ENCODE measurements at regions of chr2 and their contacts with region 1.

Region 1: GRCh38 chr2:6896930-6897759 is 19.6 kb downstream of the RSAD2 start:
- DNase-seq: peak in 2 of 9 experiments; percentile 61 to 70
- ATAC-seq: peak; percentile 58
- H3K4me3 ChIP-seq: no peak overlapping the region
- H3K4me3 Mint-ChIP-seq: no peak overlapping the region
- H3K27ac ChIP-seq: no peak overlapping the region
- H3K27ac Mint-ChIP-seq: no peak overlapping the region
- H3K4me1 ChIP-seq: peaks cover 7% of the 10 kb centered on the region
- H3K4me1 Mint-ChIP-seq: peaks cover 5% of the 10 kb centered on the region
- H3K27me3 ChIP-seq: no peaks in the 10 kb centered on the region
- H3K27me3 Mint-ChIP-seq: no peaks in the 10 kb centered on the region
- CTCF ChIP-seq: peak; percentile 95

Region 2: DNA sequence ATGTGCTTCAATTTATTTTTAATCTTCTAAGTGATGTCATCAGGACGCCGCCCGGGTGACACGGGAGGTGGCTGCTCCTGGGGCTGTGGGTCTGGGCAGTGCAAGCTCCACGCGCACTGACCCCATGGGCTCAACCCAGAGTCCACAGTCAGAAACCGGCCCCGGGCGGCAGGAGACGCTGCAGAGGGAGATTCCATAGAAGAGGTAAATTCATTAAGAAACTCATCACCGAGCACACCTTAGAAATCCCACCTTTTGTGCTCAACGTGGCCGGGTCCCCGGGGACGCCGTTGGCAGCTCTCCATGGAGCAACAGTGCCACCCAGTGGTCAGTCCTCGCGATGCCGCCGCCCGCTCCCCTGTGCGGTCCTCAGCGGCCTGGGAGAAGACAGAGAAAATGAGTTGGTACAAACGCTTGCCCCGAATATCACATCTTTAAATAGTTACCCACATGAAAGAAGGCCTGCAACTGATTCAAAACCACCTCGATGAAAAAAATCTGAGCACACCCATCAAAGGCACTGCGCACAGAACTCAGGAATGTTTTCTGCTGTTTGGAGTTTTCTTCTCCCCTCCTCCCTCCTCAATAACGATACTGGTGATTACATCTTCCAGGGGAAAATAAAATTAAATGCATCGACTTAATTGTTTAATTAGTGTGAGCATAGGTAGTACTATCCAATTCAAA is 124.0 kb before region 1 on chr2:
- CTCF ChIA-PET with region 1: no interaction called
- POLR2A ChIA-PET with region 1: no interaction called
- intact Hi-C with region 1: no loop called
- DNase-seq: peak; percentile 52 to 80 (median 63)
- ATAC-seq: peak; percentile 77
- H3K4me3 ChIP-seq: no peak overlapping the region
- H3K4me3 Mint-ChIP-seq: no peak overlapping the region
- H3K27ac ChIP-seq: no peak overlapping the region
- H3K27ac Mint-ChIP-seq: no peak overlapping the region
- H3K4me1 ChIP-seq: peaks cover 7% of the 10 kb centered on the region
- H3K4me1 Mint-ChIP-seq: peaks cover 2% of the 10 kb centered on the region
- H3K27me3 ChIP-seq: peaks cover 0 to 8% of the 10 kb centered on the region in 2 experiments
- H3K27me3 Mint-ChIP-seq: peaks cover 21% of the 10 kb centered on the region
- CTCF ChIP-seq: peak; percentile 90

Region 3: GRCh38 chr2:6865346-6866274 is 31.5 kb before region 1 on chr2 and contains the start of gene CMPK2:
- CTCF ChIA-PET with region 1: interaction called, 17 read pairs
- POLR2A ChIA-PET with region 1: no interaction called
- intact Hi-C with region 1: no loop called
- DNase-seq: peak; percentile 53 to 90 (median 82)
- ATAC-seq: peak; percentile 75
- H3K4me3 ChIP-seq: peak within 1 kb of the TSS; percentile 75 to 86
- H3K4me3 Mint-ChIP-seq: peak within 1 kb of the TSS; percentile 99
- H3K27ac ChIP-seq: peak within 1 kb of the TSS; percentile 33 to 72
- H3K27ac Mint-ChIP-seq: peak within 1 kb of the TSS; percentile 96
- H3K4me1 ChIP-seq: peaks cover 19% of the 10 kb centered on the region
- H3K4me1 Mint-ChIP-seq: peaks cover 17% of the 10 kb centered on the region
- H3K27me3 ChIP-seq: no peaks in the 10 kb centered on the region
- H3K27me3 Mint-ChIP-seq: no peaks in the 10 kb centered on the region
- CTCF ChIP-seq: peak; percentile 58
- total RNA-seq, gene CMPK2: 3.0 to 4.0 TPM

Region 4: DNA sequence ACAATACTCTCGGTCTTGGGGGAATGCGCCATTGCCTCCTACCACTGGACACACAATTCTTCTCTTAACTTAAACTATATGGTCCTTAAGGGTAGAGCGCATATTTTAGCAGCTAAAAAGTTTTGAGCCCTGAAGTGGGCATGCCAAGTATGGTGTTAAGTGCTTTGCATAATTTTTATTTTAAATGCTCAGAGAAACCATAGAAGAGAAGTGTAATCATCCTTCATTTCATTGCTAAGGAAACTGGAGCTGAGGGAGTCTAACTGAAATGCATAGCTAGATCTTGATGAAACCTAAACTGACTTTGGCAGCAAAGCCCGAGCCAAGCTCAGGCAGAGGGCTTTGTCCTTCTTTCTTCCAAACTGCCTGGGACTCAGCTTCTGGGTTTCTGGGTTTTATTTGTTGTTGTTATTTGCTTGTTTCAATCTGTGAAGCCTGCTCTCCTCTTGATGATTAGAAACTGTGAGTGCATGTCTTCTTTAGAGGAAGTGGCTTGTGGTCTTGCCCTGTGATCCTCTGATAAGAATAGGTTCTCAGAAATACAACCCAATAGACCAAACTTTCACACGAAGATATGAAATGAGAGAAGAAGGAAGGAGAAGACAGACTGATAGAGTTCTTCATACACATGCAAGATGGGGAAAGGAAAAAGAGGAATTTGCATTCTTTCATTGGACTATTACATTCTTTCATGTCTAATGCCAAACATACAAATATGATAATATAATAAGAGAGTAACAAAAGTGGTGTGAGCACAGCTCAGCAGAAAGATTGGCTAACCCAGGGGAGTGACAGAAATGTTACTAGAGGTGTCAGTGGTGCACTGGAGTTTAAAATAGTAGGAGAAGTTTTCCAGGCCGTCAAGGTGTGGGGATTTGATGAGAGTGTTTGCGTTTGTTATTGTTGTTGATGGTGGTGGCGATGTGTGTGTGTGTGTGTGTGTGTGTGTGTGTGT is 12.6 kb after region 1 on chr2:
- CTCF ChIA-PET with region 1: interaction called, 109 read pairs
- POLR2A ChIA-PET with region 1: interaction called, 8 read pairs
- intact Hi-C with region 1: loop called in 1 of 2 experiments (anchors 1 kb)
- DNase-seq: peak in 5 of 9 experiments; percentile 26 to 84 (median 53)
- ATAC-seq: peak; percentile 69
- H3K4me3 ChIP-seq: peak overlapping the region; percentile 1 to 19
- H3K4me3 Mint-ChIP-seq: peak overlapping the region; percentile 67
- H3K27ac ChIP-seq: peak overlapping the region; percentile 1 to 60
- H3K27ac Mint-ChIP-seq: peak overlapping the region; percentile 88
- H3K4me1 ChIP-seq: peaks cover 91% of the 10 kb centered on the region
- H3K4me1 Mint-ChIP-seq: peaks cover 89% of the 10 kb centered on the region
- H3K27me3 ChIP-seq: no peaks in the 10 kb centered on the region
- H3K27me3 Mint-ChIP-seq: no peaks in the 10 kb centered on the region
- CTCF ChIP-seq: no peak

Region 5: DNA sequence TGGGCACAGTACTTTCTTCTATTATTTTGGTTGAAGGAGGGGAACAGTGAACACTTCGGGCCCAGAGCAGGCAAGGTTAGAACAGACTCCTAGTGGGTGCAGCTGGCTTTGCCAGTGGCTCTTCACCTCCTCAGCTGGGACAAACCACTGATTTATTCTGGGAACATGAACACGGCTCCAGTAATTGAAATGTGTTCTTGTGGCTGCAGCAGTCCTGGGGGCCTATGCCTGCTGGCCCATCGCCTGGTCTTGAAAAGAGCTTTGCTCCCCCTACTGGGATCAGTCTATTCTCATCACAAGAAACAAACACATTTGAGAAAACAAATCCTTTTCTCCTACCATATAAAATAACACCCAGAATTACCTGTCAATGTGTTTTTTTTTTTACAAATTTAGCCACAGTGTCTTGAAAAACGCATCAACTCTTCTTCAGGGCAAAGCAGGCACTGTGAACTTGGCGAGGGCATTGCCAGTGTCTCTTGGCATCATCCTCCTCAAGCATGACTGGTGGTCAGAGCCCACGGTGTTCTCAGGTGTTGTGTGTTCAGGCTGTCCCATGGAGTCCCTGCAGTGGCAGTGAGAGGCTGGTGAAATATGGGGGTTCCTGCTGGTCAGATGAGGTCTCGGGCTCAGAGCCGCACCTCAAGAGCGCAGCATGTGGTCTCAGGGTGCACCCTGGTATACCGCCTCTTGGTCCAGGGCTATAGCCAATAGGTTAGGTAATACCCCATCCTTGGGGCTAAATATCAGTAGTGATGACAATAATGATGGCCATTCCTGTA is 71.4 kb after region 1 on chr2:
- CTCF ChIA-PET with region 1: interaction called, 5 read pairs
- POLR2A ChIA-PET with region 1: no interaction called
- intact Hi-C with region 1: loop called (anchors 1 to 2 kb)
- DNase-seq: peak in 2 of 9 experiments; percentile 11 to 25
- ATAC-seq: no peak
- H3K4me3 ChIP-seq: no peak overlapping the region
- H3K4me3 Mint-ChIP-seq: no peak overlapping the region
- H3K27ac ChIP-seq: no peak overlapping the region
- H3K27ac Mint-ChIP-seq: no peak overlapping the region
- H3K4me1 ChIP-seq: no peaks in the 10 kb centered on the region
- H3K4me1 Mint-ChIP-seq: peaks cover 12% of the 10 kb centered on the region
- H3K27me3 ChIP-seq: no peaks in the 10 kb centered on the region
- H3K27me3 Mint-ChIP-seq: no peaks in the 10 kb centered on the region
- CTCF ChIP-seq: no peak

Region 6: DNA sequence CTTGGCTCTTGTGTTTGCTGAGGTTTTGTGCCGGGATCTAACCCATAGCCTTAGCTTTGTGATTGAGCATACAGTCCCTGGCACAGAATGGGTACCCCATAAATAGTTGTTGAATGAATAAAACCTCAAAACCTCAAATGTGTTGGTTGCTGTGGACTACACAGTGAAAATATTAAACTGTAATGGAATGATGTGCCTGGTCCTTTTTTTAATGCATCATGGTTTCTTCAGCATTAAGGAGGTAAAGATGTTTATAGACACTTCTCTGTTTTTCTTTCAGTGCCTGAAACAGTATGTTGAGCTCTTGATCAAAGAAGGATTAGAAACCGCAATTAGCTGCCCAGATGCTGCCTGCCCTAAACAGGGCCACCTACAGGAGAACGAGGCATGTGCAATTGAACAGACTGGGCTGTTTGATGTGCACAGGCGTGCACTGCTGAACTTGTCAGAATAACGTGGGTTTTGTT is 117.1 kb after region 1 on chr2:
- CTCF ChIA-PET with region 1: interaction called, 26 read pairs
- POLR2A ChIA-PET with region 1: no interaction called
- intact Hi-C with region 1: loop called (anchors 1 kb)
- DNase-seq: peak in 4 of 9 experiments; percentile 23 to 57 (median 45)
- ATAC-seq: peak; percentile 68
- H3K4me3 ChIP-seq: no peak overlapping the region
- H3K4me3 Mint-ChIP-seq: no peak overlapping the region
- H3K27ac ChIP-seq: no peak overlapping the region
- H3K27ac Mint-ChIP-seq: no peak overlapping the region
- H3K4me1 ChIP-seq: no peaks in the 10 kb centered on the region
- H3K4me1 Mint-ChIP-seq: peaks cover 30% of the 10 kb centered on the region
- H3K27me3 ChIP-seq: no peaks in the 10 kb centered on the region
- H3K27me3 Mint-ChIP-seq: no peaks in the 10 kb centered on the region
- CTCF ChIP-seq: peak; percentile 45

Region 7: DNA sequence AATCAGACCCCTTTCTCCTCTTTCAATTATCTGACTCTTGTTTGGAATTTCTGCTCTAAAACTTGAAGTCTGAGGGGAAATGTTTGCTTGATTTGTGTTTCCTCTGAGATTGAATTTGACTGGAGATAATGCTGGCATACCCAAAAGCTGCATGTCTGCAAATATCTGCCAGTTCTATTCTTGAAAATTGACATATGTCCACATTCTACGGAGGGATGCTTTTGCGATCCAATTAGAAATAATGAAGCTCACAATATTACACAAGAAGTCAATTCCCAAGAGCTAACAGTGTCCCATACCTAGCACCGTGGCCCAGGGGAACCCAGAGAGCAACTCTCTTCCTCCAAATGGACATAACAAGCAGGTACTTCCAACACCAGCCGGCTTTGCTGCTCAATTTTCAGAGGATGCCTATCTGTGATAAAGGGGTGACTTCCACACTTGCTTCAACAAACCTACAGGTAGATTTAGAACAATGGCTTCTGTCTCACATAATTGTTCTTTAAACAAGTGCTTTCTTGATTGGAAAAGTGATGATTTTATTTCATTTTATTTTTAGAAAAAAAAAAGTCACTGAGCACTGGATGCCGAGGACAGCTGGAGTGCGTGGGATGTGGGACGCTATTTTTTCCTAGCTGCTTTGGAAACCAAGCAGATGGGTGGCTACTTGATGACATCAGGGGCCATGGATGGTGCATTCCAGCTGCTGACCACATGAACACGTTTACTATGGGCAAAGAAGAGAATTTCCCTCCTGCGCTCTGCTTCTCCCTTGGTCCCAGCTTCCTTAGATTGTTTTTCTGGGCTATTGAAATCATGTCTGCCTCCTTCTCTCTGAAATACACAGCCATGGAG is 508.9 kb after region 1 on chr2:
- CTCF ChIA-PET with region 1: no interaction called
- POLR2A ChIA-PET with region 1: no interaction called
- intact Hi-C with region 1: no loop called
- DNase-seq: no peak
- ATAC-seq: no peak
- H3K4me3 ChIP-seq: no peak overlapping the region
- H3K4me3 Mint-ChIP-seq: no peak overlapping the region
- H3K27ac ChIP-seq: no peak overlapping the region
- H3K27ac Mint-ChIP-seq: no peak overlapping the region
- H3K4me1 ChIP-seq: peaks cover 17% of the 10 kb centered on the region
- H3K4me1 Mint-ChIP-seq: peaks cover 14% of the 10 kb centered on the region
- H3K27me3 ChIP-seq: peaks cover 0 to 4% of the 10 kb centered on the region in 2 experiments
- H3K27me3 Mint-ChIP-seq: peaks cover 31% of the 10 kb centered on the region
- CTCF ChIP-seq: no peak

Region 8: GRCh38 chr2:7625392-7626138 is 728.4 kb after region 1 on chr2:
- CTCF ChIA-PET with region 1: no interaction called
- POLR2A ChIA-PET with region 1: no interaction called
- intact Hi-C with region 1: no loop called
- DNase-seq: no peak
- ATAC-seq: no peak
- H3K4me3 ChIP-seq: no peak overlapping the region
- H3K4me3 Mint-ChIP-seq: no peak overlapping the region
- H3K27ac ChIP-seq: no peak overlapping the region
- H3K27ac Mint-ChIP-seq: peak overlapping the region; percentile 38
- H3K4me1 ChIP-seq: peaks cover 4% of the 10 kb centered on the region
- H3K4me1 Mint-ChIP-seq: peaks cover 6% of the 10 kb centered on the region
- H3K27me3 ChIP-seq: no peaks in the 10 kb centered on the region
- H3K27me3 Mint-ChIP-seq: no peaks in the 10 kb centered on the region
- CTCF ChIP-seq: no peak

Measured in CD8-positive, alpha-beta T cell (primary cell).